Ascending aorta (tissue), 2 donors: ENCODE measurements at regions of chr5 and their contacts with region 1.

Region 1: GRCh38 chr5:150129813-150130492 is 25.7 kb downstream of the PDGFRB start:
- DNase-seq: peak in 1 of 2 donors; percentile 86
- H3K4me3 ChIP-seq: no peak overlapping the region
- H3K27ac ChIP-seq: peak overlapping the region; percentile 98 to 99
- H3K4me1 ChIP-seq: peaks cover 16 to 47% of the 10 kb centered on the region in 2 donors
- H3K27me3 ChIP-seq: no peaks in the 10 kb centered on the region
- CTCF ChIP-seq: peak; percentile 92 to 96 (median 95)

Region 2: GRCh38 chr5:149611326-149611725 is 518.6 kb before region 1 on chr5:
- intact Hi-C with region 1: no loop called
- DNase-seq: no peak
- H3K4me3 ChIP-seq: no peak overlapping the region
- H3K27ac ChIP-seq: no peak overlapping the region
- H3K4me1 ChIP-seq: no peaks in the 10 kb centered on the region
- H3K27me3 ChIP-seq: no peaks in the 10 kb centered on the region
- CTCF ChIP-seq: no peak

Region 3: DNA sequence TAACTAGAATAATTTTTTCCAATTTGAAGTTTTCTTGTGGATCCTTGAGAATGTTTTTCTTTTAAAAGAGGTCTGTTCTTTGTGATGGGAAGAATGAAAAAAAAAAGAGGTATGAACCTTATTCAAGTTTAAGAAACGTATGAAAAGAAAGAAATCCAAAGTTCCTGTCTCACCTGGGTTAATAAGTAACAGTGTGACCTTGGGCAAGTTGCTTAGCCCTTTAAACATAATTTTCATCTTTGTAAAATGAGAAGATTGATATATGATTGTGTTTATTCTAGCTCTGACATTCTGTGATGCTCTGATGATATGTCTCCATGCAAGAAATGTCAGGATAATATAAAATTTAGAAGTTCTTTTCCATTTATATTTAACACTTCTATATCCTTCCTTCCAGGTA is 150.1 kb before region 1 on chr5:
- intact Hi-C with region 1: no loop called
- DNase-seq: no peak
- H3K4me3 ChIP-seq: no peak overlapping the region
- H3K27ac ChIP-seq: no peak overlapping the region
- H3K4me1 ChIP-seq: no peaks in the 10 kb centered on the region
- H3K27me3 ChIP-seq: no peaks in the 10 kb centered on the region
- CTCF ChIP-seq: no peak

Region 4: DNA sequence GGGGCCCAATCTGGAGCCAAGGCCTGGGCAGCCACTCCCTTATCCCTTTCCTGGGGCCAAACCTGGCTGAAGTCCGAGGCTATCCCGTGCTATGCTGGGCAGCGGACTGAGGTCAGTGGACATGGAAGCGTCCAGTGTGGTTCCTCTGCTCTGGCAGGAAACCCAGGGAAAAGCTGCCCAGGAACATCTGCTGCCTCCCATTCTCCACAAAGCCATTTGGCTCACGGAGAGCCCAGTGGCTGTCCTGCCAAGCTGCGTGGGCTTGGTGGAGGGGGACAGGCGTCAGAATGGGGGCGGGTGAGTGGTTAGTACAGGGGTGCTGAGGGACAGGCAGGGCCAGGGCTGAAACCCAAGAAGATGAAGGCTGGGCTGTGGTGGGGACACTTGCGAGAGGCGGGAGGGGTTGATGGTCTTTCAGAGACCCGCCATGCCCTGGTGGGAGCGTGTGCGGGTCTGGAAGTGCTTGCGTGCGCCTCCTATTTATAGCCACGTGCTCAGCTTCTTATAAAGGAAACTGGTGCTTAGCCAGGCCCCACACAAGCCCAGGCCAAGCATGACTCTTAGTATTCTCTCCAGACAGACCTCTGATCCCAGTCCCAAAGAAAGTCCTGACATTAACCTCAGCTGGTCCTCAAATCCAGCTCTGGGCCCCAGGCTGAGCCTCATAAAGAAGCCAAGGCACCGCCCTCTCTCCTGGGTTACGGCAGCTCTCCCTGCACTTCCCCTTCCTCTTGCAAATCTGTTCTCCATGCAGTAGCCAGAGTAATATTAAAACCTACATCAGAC is 50.5 kb after region 1 on chr5:
- intact Hi-C with region 1: loop called (anchors 2 kb)
- DNase-seq: peak; percentile 44 to 91
- H3K4me3 ChIP-seq: peak overlapping the region in 1 of 2 donors; percentile 21
- H3K27ac ChIP-seq: peak overlapping the region; percentile 95 to 96
- H3K4me1 ChIP-seq: peaks cover 17 to 45% of the 10 kb centered on the region in 2 donors
- H3K27me3 ChIP-seq: no peaks in the 10 kb centered on the region
- CTCF ChIP-seq: no peak

Region 5: GRCh38 chr5:150302301-150303069 is 172.5 kb after region 1 on chr5 and contains the start of gene ARSI:
- intact Hi-C with region 1: no loop called
- DNase-seq: no peak
- H3K4me3 ChIP-seq: peak within 1 kb of the TSS; percentile 46 to 60
- H3K27ac ChIP-seq: peak within 1 kb of the TSS; percentile 33 to 41
- H3K4me1 ChIP-seq: peaks cover 6 to 8% of the 10 kb centered on the region in 2 donors
- H3K27me3 ChIP-seq: no peaks in the 10 kb centered on the region
- CTCF ChIP-seq: peak in 1 of 3 experiments; percentile 31
- total RNA-seq, gene ARSI: not detected

Region 6: DNA sequence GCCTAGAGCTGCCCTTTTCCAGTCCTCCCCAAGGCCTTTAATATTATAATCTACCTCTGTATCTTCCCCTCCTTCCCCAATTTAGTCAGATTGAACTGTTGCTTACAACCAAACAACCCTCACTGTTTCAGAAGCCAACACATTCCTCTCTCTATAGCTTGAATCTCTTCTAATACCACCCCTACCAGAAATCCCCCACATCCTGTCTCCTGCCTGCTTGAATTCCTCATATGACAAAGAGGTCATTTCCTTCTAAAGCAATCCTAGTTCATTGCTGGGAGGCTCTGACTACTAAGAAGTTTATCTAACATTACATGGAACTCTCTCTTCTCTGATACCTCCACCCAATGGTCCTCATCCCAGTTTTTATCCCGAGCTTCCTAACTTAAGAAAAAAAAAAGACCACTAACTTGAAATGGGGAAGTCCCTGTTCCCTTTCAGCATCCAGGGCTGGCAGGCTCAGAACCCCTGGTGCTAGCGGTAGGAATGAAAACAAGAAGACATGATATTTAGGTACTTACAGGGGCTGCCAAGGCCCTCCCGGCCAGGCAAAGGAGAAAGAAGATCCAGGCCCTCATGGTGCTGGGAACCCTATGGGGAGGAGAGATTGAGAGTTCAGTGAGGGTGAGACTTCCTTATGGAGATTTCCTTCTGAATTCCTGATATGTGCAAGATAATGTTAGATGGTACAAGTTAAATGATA is 1545.8 kb after region 1 on chr5:
- intact Hi-C with region 1: loop called (anchors 10 kb)
- DNase-seq: no peak
- H3K4me3 ChIP-seq: peak overlapping the region in 1 of 2 donors; percentile 25
- H3K27ac ChIP-seq: peak overlapping the region; percentile 93 to 98
- H3K4me1 ChIP-seq: peaks cover 59 to 96% of the 10 kb centered on the region in 2 donors
- H3K27me3 ChIP-seq: no peaks in the 10 kb centered on the region
- CTCF ChIP-seq: no peak